ENCODE measurements at regions of chr5 and their contacts with region 1.

Region 1: GRCh38 chr5:7261049-7261448 is 134.9 kb upstream of the ADCY2 start:
- DNase-seq: no peak
- ATAC-seq: peak; percentile 29; the same call in 1 of the 3 replicates
- H3K4me3 ChIP-seq: no peak overlapping the region
- H3K27ac ChIP-seq: no peak overlapping the region
- H3K4me1 ChIP-seq: no peaks in the 10 kb centered on the region
- H3K27me3 ChIP-seq: no peaks in the 10 kb centered on the region
- CTCF ChIP-seq: peak; percentile 36 to 46 (median 41); a peak in 3 of 6 replicates
- EP300 ChIP-seq: no peak
- POLR2A ChIP-seq: no peak
- RAD21 ChIP-seq: peak; percentile 69

Region 2: GRCh38 chr5:6788956-6789649 is 471.9 kb before region 1 on chr5:
- CTCF ChIA-PET with region 1: no interaction called
- POLR2A ChIA-PET with region 1: no interaction called
- RAD21 ChIA-PET with region 1: no interaction called
- SMC1A ChIA-PET with region 1: no interaction called
- in situ Hi-C with region 1: no loop called
- intact Hi-C with region 1: no loop called
- DNase-seq: no peak
- ATAC-seq: no peak
- H3K4me3 ChIP-seq: no peak overlapping the region
- H3K27ac ChIP-seq: no peak overlapping the region
- H3K4me1 ChIP-seq: no peaks in the 10 kb centered on the region
- H3K27me3 ChIP-seq: peaks cover 3 to 5% of the 10 kb centered on the region in 2 experiments; a peak in 2 of 4 replicates
- CTCF ChIP-seq: peak in 1 of 3 experiments; percentile 19; a peak in 1 of 6 replicates
- EP300 ChIP-seq: no peak
- POLR2A ChIP-seq: no peak
- RAD21 ChIP-seq: no peak

Region 3: DNA sequence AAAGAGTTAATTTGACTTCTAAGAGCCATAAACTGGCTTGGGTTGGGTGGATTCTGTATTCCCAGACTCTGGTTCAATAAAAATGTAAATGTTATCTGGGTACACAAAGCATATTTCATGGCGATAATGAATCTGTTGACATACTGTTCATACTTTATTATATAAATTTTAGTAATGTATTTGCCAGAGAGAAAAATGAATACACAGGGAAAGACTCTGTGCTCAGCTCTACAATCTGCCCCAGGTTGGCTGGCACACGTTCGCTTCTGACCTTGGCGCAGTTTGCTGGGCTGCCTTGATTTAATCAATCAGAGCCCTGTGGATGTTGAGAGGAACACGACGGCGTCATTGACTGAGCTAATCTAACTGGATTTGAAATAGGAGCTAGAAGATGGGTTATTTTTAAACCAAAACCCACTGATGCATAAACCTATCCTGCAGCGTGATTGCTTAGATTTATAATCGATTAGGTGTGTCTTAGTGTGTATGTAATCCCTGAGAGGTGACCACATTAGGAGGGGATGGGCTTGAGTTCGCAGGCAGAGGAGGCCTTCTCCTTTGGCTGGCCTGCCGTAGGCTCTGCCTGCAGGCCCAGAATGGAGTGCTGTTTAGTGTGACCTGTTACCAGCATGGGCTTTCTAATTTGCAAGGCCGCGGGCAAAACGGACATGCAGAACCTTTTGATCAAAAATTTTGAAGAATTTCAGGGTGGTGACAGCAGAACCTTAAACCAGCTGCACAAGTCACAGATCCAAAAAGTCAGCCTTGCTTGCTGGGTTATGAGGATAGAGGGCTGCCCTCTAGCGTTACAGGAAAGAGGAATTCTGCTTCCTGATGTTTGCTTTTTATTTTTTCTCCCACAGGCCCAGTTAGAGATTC is 131.0 kb after region 1 on chr5:
- CTCF ChIA-PET with region 1: no interaction called
- POLR2A ChIA-PET with region 1: no interaction called
- RAD21 ChIA-PET with region 1: no interaction called
- SMC1A ChIA-PET with region 1: no interaction called
- in situ Hi-C with region 1: no loop called
- intact Hi-C with region 1: loop called (anchors 5 kb)
- DNase-seq: no peak
- ATAC-seq: no peak
- H3K4me3 ChIP-seq: no peak overlapping the region
- H3K27ac ChIP-seq: no peak overlapping the region
- H3K4me1 ChIP-seq: no peaks in the 10 kb centered on the region
- H3K27me3 ChIP-seq: no peaks in the 10 kb centered on the region; a peak in 1 of 4 replicates
- CTCF ChIP-seq: peak; percentile 29 to 33 (median 30); a peak in 4 of 6 replicates
- EP300 ChIP-seq: no peak
- POLR2A ChIP-seq: no peak
- RAD21 ChIP-seq: no peak

Region 4: DNA sequence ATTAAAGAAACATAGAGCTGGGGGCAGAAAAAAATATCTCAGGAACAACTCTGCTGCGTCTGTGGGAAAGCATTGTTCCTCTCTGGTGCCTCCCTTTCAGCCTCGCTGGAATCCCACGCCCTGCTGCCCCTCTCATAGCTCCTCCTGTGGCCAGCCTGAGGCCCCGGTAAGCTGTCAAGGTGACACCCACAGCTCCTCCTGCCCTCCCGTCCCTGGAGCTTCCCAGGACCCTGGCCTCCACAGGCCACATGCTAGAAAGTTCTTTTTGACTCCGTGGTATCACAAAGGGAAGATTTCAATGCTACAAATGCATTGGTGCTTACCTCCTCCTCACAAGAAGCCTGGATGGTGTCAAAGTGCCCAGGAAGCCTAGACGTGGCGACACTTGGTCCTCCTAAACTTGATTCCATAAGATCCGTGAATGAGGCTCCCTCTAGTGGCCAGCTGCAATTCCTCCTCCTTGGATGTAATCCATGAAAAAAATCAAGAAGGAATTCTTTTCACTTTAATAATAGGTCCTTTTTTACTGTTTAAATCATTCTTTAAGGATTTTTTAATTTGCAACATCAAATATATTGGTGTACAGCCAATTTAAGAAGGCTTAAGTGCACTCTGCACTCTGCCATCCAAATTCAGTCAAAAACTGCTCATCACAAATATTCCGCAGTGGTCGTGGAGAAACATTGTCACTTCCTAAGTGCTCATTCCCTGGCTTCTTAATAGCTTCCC is 485.0 kb after region 1 on chr5:
- CTCF ChIA-PET with region 1: interaction called, 3 read pairs
- POLR2A ChIA-PET with region 1: no interaction called
- RAD21 ChIA-PET with region 1: no interaction called
- SMC1A ChIA-PET with region 1: interaction called, 4 read pairs
- in situ Hi-C with region 1: no loop called
- intact Hi-C with region 1: loop called (anchors 1 kb)
- DNase-seq: no peak
- ATAC-seq: peak; percentile 61
- H3K4me3 ChIP-seq: no peak overlapping the region
- H3K27ac ChIP-seq: no peak overlapping the region
- H3K4me1 ChIP-seq: no peaks in the 10 kb centered on the region
- H3K27me3 ChIP-seq: no peaks in the 10 kb centered on the region
- CTCF ChIP-seq: peak; percentile 59 to 83 (median 81)
- EP300 ChIP-seq: no peak
- POLR2A ChIP-seq: no peak
- RAD21 ChIP-seq: peak; percentile 62